Natural killer cell (primary cell): ENCODE measurements at regions of chr16 and their contacts with region 1.

Region 1: DNA sequence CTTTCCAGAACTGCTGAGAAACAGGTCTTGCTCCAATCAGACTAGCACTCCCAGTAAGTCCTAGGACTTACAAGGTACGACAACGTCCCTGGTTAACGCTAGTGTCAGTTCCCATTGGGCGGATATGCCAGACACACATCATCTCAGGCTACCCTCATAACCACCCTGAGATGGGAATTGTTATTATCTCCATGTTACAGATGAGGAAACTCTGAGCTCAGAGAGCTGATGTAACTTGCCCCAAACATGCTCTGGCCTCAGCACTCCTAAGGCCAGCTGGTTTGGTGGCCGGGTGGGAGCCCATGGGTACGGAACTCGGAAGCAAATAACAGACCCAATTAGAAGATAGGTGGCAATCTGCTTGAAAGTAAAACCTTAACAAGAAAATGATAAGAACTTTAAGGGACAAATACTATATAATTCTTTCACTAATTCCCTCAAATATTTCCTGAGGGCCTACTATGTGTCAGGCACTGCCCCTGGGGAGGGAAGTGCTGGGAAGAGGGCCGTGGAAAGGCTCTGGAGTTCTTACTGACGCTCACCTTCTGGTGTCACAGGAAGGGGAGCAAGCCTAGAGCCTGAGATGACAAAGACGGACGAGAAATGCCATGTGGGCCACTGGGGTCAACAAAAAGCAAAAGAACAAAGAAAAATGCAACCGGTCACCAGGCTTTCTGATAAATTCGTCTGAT is 6.9 kb downstream of the CREBBP start:
- DNase-seq: no peak
- ATAC-seq: no peak
- H3K4me3 ChIP-seq: no peak overlapping the region
- H3K4me3 Mint-ChIP-seq: peak overlapping the region; percentile 21
- H3K27ac ChIP-seq: no peak overlapping the region
- H3K27ac Mint-ChIP-seq: peak overlapping the region; percentile 8 to 41
- H3K4me1 ChIP-seq: peaks cover 71% of the 10 kb centered on the region
- H3K4me1 Mint-ChIP-seq: peaks cover 95 to 100% of the 10 kb centered on the region in 2 donors
- H3K27me3 ChIP-seq: no peaks in the 10 kb centered on the region
- H3K27me3 Mint-ChIP-seq: no peaks in the 10 kb centered on the region
- CTCF ChIP-seq: no peak

Region 2: DNA sequence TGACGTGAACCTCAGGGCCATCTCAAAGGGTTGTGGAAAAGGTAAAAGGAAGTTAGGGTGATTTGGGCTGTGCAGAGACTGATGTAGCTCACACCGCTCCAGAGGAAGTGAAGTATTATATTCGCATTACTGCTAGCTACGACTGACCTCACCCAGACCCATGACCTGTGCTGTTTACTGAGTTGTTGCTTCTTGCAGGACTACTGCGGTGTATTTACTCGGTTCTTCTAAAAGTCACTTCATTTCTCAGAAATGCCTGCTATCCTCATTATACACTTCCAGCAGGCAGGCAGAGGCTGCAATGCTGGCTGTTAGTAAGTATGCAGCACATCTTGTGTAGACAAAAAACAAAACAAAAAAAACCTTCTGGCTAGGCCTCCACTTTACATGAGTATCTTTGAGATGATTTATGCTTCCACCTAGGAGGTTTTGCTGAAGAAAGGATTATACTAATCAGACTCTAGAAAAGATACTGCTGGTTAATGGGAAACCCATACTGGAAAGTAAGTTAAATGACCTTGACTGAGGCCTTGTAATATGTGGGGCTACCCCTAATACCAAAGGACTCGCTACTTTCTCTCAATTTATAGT is 69.1 kb before region 1 on chr16:
- intact Hi-C with region 1: loop called (anchors 5 kb)
- DNase-seq: no peak
- ATAC-seq: peak in 2 of 3 donors; percentile 49 to 57
- H3K4me3 ChIP-seq: no peak overlapping the region
- H3K4me3 Mint-ChIP-seq: peak overlapping the region; percentile 14
- H3K27ac ChIP-seq: no peak overlapping the region
- H3K27ac Mint-ChIP-seq: peak overlapping the region; percentile 21
- H3K4me1 ChIP-seq: peaks cover 76% of the 10 kb centered on the region
- H3K4me1 Mint-ChIP-seq: peaks cover 93 to 99% of the 10 kb centered on the region in 2 donors
- H3K27me3 ChIP-seq: no peaks in the 10 kb centered on the region
- H3K27me3 Mint-ChIP-seq: no peaks in the 10 kb centered on the region
- CTCF ChIP-seq: no peak